Sigmoid colon (tissue), 7 donors: ENCODE measurements at regions of chr9 and their contacts with region 1.

Region 1: DNA sequence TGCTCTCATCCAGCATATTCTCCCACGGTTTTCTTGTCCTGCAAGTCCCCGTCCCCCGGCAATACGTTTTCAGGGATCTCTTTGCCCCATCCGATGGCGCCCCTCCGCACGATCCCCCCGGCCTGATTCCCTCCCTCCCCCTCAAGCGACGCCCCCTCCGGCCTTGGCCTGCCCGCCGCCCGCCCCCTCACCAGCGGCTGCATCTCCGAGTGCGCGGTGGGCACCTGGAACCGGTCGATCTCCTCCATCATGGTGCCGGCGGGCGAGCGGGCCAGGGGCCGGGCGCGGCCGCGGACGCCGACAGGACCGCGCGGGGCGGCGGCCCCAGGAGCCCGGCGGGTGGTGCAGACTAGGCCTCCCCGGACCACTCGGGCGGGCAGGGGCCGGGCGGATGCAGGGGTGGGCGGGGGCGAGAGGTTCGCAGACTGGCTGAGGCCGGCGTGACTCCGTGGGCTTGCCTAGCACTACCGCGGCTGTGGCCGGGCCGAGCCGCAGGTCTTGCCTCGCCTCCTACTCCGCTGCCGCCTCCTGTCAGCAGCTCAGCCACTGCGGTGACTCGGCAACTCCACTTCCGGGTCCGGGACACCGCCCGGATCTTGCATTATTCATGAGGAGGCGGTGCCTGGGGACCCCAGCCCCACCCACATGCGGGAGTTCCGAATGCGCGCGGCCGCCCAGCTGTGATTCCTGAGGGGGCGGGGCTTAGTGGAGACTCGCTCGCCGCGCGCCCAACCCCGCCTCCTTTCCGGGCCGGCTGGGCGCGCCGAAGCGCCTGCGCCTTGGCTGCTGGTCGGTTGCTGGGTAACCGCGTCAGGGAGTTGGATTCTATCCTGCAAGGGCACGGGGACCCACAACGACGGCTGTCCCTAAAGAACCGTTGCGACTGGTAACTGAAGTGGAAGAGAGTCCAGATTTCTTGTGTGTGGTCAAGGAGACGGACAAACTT is at the starts of genes DNAI1 and FAM219A:
- DNase-seq: peak; percentile 99
- H3K4me3 ChIP-seq: peak within 1 kb of the TSS; percentile 59 to 96 (median 70)
- H3K27ac ChIP-seq: peak within 1 kb of the TSS; percentile 82 to 88 (median 84)
- H3K4me1 ChIP-seq: peaks cover 0 to 36% (median 22%) of the 10 kb centered on the region in 4 donors
- H3K27me3 ChIP-seq: no peaks in the 10 kb centered on the region
- CTCF ChIP-seq: no peak
- EP300 ChIP-seq: no peak
- POLR2A ChIP-seq: peak; percentile 55 to 79
- total RNA-seq, gene DNAI1: under 0.01 TPM in 1 of 4 donors, not detected in the others
- total RNA-seq, gene FAM219A: 7.4 to 10.2 (median 8.8) TPM

Region 2: DNA sequence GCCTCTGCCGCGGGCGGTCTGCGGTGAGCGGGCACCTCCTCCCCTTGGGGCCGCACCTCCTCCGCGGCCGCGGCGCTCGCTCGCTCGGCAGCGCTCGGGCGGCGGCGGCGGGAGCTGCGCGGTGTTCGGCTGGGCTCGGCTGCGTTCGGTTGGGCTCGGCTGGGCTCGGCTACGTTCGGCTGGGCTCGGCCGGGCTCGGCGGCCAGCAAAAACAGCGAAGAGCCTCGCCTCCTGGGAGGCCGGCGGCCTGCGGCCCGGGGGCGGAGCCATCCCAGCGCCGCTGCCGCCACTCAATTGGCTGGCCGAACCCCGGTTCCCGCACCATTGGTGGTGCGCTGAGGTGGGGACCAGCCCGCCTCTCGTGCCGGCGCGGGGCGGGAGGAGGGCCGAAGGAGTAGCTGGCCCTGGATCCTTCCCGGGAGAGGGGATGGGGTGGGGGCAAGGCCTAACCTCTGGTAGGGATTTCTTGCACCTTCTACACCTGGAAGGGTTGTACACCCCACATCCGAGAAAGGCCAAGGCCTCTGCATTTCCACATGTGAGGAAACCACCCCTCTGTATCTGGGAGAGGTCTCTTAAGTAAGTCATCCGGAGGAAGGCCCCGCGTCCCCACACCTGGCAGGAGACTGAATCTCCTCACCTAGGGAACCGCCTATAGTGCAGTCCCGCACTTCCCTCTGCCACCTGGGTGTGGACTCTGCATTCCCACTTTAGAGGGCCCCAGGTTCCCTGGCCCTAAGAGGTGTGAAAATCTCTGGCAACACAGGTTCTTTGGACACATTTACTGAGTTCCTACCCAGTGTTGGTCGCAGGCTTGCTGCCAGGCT is 64.9 kb after region 1 on chr9 and contains the start of gene ENHO:
- intact Hi-C with region 1: loop called (anchors 2 kb)
- DNase-seq: peak; percentile 93
- H3K4me3 ChIP-seq: peak within 1 kb of the TSS; percentile 16 to 54 (median 50)
- H3K27ac ChIP-seq: peak within 1 kb of the TSS in 3 of 4 donors; percentile 30 to 63 (median 47)
- H3K4me1 ChIP-seq: peaks cover 0 to 13% (median 8%) of the 10 kb centered on the region in 4 donors
- H3K27me3 ChIP-seq: no peaks in the 10 kb centered on the region
- CTCF ChIP-seq: no peak
- EP300 ChIP-seq: no peak
- POLR2A ChIP-seq: no peak
- total RNA-seq, gene ENHO: 2.5 TPM in 1 of 4 donors, not detected in the others